GM23248 (cell line): ENCODE measurements at regions of chr16 and their contacts with region 1.

Region 1: DNA sequence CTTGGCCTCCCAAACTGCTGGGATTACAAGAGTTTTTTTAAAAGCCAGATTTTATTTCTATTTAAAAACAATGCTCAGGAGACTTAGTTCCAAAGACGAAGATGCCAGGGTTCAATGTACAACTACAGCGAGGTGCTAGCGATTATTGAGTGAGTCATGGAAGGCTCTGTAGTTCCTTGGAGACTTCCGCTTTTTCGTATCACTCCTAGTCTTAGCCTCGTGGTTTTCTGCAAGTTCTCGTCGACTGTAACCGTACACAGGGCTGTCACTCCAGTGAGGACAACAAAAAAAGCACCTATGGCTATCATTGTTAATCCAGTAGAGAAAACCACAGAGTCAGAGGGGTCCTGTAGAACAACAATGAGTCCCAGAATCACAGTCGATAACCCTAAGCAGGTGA is 22.7 kb upstream of the ZC3H7A start:
- DNase-seq: no peak
- H3K4me3 ChIP-seq: no peak overlapping the region
- H3K27ac ChIP-seq: no peak overlapping the region
- H3K4me1 ChIP-seq: no peaks in the 10 kb centered on the region
- H3K27me3 ChIP-seq: no peaks in the 10 kb centered on the region

Region 2: GRCh38 chr16:11880007-11880406 is 60.2 kb after region 1 on chr16:
- in situ Hi-C with region 1: loop called (anchors 10 kb)
- DNase-seq: no peak
- H3K4me3 ChIP-seq: no peak overlapping the region
- H3K27ac ChIP-seq: no peak overlapping the region
- H3K4me1 ChIP-seq: peaks cover 3% of the 10 kb centered on the region
- H3K27me3 ChIP-seq: no peaks in the 10 kb centered on the region

Region 3: GRCh38 chr16:13436641-13437412 is 1617.0 kb after region 1 on chr16:
- in situ Hi-C with region 1: no loop called
- DNase-seq: no peak
- H3K4me3 ChIP-seq: no peak overlapping the region
- H3K27ac ChIP-seq: no peak overlapping the region
- H3K4me1 ChIP-seq: no peaks in the 10 kb centered on the region
- H3K27me3 ChIP-seq: no peaks in the 10 kb centered on the region